Endothelial cell of umbilical vein (primary cell): ENCODE measurements at regions of chr11 and their contacts with region 1.

Region 1: GRCh38 chr11:74154621-74155281 is 16.1 kb downstream of the C2CD3 start:
- DNase-seq: peak; percentile 11
- H3K4me3 ChIP-seq: no peak overlapping the region
- H3K27ac ChIP-seq: no peak overlapping the region
- H3K4me1 ChIP-seq: peaks cover 7% of the 10 kb centered on the region
- H3K27me3 ChIP-seq: no peaks in the 10 kb centered on the region
- CTCF ChIP-seq: no peak
- POLR2A ChIP-seq: no peak

Region 2: DNA sequence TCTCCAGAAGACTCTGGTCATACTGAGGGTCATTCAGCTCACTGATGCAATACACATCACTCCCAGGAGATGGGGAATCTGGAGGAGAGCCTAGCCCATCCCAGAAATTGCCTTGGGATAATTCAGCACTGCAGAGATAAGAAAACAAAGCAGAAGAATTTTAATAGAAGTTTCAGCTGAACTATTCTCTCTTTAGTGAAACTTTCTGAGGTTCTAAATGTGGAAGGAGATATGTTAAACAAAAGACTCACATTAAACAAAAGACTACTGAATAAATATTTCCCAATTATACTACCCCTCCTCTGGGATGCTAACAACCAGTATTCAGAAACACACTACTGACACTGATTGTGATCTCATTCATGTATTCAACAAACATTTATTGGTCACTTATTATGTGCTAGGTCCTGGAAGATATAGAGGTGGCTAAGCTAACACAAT is 31.7 kb before region 1 on chr11:
- CTCF ChIA-PET with region 1: no interaction called
- POLR2A ChIA-PET with region 1: no interaction called
- dilution Hi-C with region 1: no loop called
- intact Hi-C with region 1: loop called (anchors 1 kb)
- DNase-seq: no peak
- H3K4me3 ChIP-seq: no peak overlapping the region
- H3K27ac ChIP-seq: no peak overlapping the region
- H3K4me1 ChIP-seq: no peaks in the 10 kb centered on the region
- H3K27me3 ChIP-seq: no peaks in the 10 kb centered on the region
- CTCF ChIP-seq: no peak
- POLR2A ChIP-seq: no peak

Region 3: DNA sequence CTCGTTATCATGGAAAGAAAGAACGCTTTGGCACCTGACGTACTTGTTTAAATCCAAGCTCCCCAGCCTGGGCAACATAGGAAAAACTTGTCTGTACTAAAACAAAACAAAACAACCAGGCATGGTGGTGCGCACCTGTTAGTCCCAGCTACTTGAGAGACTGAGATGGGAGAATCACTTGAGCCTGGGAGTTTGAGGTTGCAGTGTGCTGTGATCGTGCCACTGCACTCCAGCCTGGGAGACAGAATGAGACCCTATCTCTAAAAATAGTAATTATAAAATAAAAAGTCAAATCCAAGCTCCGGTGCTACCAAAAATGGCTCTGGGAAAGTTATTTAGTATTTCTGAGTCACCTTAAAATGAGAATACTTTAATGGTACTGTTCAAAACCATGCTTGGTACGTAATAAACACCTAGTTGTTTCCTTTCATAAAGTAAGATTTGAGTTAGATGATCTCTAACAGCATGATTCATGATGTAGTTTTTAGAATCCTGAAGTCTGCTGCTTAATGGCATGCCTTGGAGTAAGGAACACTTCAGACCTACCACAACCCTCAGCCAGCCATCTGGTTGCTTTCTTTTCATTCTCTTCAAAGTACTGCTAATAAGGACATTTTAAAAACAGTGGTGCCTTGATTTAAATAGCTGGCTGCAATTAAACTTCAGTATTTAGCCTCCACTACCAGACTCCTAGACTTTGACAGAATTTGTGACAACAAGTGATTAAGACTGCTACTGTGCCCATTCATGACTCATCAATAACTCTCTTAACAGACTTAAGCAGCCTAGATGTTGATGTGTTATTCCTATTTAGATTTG is 24.7 kb after region 1 on chr11:
- CTCF ChIA-PET with region 1: no interaction called
- POLR2A ChIA-PET with region 1: no interaction called
- dilution Hi-C with region 1: no loop called
- intact Hi-C with region 1: no loop called
- DNase-seq: peak; percentile 17
- H3K4me3 ChIP-seq: no peak overlapping the region
- H3K27ac ChIP-seq: no peak overlapping the region
- H3K4me1 ChIP-seq: no peaks in the 10 kb centered on the region
- H3K27me3 ChIP-seq: no peaks in the 10 kb centered on the region
- CTCF ChIP-seq: no peak
- POLR2A ChIP-seq: no peak